Activated T-helper 1 cell treated with anti-CD3 and anti-CD28 coated beads, Interleukin-12 subunit alpha, Interleukin-12 subunit beta, Interleukin-2, Interleukin-4 antibody, amounts not matched to agents 30 ng/mL and 10 ng/mL and 1 ng/mL, durations not matched to agents 14 hours and 24 hours and 36 hours (primary cell): ENCODE measurements at regions of chr15 and their contacts with region 1.

Region 1: DNA sequence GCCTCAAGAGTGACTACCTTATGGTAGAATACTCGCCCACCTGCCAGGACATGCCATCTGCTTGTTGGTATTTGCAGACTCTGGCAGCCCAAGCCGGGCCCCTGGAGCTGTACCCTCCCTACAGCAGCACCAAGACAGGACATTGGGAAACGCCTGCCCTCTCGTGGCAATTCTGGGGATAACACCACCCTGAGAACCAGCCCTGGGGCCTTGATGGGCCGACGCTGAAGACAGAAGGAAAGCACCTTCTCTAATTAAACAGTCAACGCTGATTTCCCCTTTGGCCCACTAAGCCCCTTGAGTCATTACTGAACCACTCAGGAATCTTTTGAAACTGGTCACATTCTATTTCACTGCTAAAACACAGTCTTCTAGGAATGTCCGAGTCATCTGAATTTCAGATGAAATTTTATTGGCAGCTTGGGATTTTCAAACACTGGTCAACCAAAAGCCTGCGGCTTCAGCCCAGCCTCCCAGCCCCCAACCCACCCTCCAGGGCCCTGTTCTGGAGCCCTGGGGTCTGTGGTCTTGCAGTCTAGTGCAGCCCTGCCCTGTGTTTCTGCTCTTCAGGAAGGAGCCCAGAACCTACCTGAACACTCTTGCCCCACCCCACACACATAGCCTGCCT is 91.3 kb downstream of the TMEM266 start:
- DNase-seq: peak; percentile 60
- H3K4me3 Mint-ChIP-seq: no peak overlapping the region
- H3K27ac Mint-ChIP-seq: no peak overlapping the region
- H3K4me1 Mint-ChIP-seq: no peaks in the 10 kb centered on the region
- H3K27me3 Mint-ChIP-seq: peaks cover 22% of the 10 kb centered on the region

Region 2: DNA sequence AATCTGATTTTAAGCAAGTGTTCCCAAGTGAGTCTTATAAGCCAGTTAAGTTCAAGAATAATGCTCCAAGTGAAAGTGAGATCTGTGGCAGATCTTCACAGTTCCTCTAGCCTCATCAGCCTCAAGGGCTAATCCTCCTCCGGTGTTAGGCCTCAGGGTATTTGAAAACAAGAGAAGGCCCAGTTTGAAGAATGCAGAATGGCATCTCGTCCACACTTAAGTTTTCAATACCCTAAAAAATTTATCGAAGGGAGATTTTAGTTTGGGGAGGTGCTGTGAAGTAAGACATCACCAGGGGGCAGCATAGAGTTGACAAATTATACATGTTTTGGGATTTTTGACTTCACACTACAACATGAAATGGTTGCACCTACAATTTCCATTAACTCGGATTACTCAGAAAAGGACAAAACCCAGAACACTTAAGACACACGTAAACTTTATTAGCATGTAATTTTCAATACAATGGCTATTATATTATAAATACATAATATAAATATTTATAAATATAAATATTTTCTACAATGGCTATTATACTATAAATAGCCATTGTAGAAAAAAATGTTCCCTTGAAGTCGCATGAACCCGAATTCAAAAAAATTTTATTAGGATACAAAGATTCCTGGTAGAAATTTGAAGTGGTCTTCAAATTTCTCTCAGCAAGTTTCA is 93.6 kb before region 1 on chr15:
- intact Hi-C with region 1: loop called (anchors 1 kb)
- DNase-seq: no peak
- H3K4me3 Mint-ChIP-seq: no peak overlapping the region
- H3K27ac Mint-ChIP-seq: no peak overlapping the region
- H3K4me1 Mint-ChIP-seq: peaks cover 26% of the 10 kb centered on the region
- H3K27me3 Mint-ChIP-seq: peaks cover 52% of the 10 kb centered on the region

Region 3: GRCh38 chr15:76163475-76163881 is 12.4 kb after region 1 on chr15:
- intact Hi-C with region 1: no loop called
- DNase-seq: no peak
- H3K4me3 Mint-ChIP-seq: no peak overlapping the region
- H3K27ac Mint-ChIP-seq: no peak overlapping the region
- H3K4me1 Mint-ChIP-seq: no peaks in the 10 kb centered on the region
- H3K27me3 Mint-ChIP-seq: peaks cover 2% of the 10 kb centered on the region

Region 4: DNA sequence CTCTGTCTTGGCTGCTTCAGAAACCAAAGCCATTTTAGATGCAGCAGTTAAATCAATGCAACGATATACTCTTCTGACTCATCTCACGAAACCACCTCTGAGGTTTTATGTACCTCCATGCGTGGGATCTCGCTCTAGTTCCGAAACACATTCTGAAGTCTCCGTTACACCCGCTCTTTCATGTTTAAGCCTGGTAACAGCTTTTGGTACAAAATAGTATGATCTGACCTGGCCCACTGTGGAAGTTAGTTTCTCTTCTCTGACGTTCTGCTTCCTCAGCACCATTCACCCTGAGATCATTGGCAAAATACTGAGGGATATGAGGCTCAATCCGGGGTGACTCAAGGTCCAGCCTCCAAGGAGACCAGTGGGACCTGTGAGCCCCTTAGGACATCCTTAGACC is 30.6 kb after region 1 on chr15:
- intact Hi-C with region 1: loop called (anchors 1 kb)
- DNase-seq: peak; percentile 33
- H3K4me3 Mint-ChIP-seq: peak overlapping the region; percentile 0
- H3K27ac Mint-ChIP-seq: peak overlapping the region; percentile 16
- H3K4me1 Mint-ChIP-seq: peaks cover 10% of the 10 kb centered on the region
- H3K27me3 Mint-ChIP-seq: peaks cover 40% of the 10 kb centered on the region